Activated CD4-positive, alpha-beta T cell treated with anti-CD3 and anti-CD28 coated beads for 36 hours (primary cell): ENCODE measurements at regions of chr9 and their contacts with region 1.

Region 1: GRCh38 chr9:121074635-121075385 is at the start of gene CNTRL:
- DNase-seq: peak; percentile 98
- ATAC-seq: peak; percentile 89
- H3K4me3 Mint-ChIP-seq: peak within 1 kb of the TSS; percentile 96
- H3K27ac Mint-ChIP-seq: peak within 1 kb of the TSS; percentile 82
- H3K4me1 Mint-ChIP-seq: peaks cover 45% of the 10 kb centered on the region
- H3K27me3 Mint-ChIP-seq: no peaks in the 10 kb centered on the region
- total RNA-seq, gene CNTRL: 64.1 to 72.2 TPM

Region 2: GRCh38 chr9:120579750-120580590 is 494.8 kb before region 1 on chr9 and contains the start of gene CDK5RAP2:
- CTCF ChIA-PET with region 1: no interaction called
- POLR2A ChIA-PET with region 1: no interaction called
- intact Hi-C with region 1: loop called in 1 of 2 experiments (anchors 2 kb)
- DNase-seq: peak; percentile 96
- ATAC-seq: peak; percentile 99
- H3K4me3 Mint-ChIP-seq: peak within 1 kb of the TSS; percentile 99
- H3K27ac Mint-ChIP-seq: peak within 1 kb of the TSS; percentile 94
- H3K4me1 Mint-ChIP-seq: peaks cover 40% of the 10 kb centered on the region
- H3K27me3 Mint-ChIP-seq: no peaks in the 10 kb centered on the region
- total RNA-seq, gene CDK5RAP2: 68.8 to 85.8 TPM

Region 3: DNA sequence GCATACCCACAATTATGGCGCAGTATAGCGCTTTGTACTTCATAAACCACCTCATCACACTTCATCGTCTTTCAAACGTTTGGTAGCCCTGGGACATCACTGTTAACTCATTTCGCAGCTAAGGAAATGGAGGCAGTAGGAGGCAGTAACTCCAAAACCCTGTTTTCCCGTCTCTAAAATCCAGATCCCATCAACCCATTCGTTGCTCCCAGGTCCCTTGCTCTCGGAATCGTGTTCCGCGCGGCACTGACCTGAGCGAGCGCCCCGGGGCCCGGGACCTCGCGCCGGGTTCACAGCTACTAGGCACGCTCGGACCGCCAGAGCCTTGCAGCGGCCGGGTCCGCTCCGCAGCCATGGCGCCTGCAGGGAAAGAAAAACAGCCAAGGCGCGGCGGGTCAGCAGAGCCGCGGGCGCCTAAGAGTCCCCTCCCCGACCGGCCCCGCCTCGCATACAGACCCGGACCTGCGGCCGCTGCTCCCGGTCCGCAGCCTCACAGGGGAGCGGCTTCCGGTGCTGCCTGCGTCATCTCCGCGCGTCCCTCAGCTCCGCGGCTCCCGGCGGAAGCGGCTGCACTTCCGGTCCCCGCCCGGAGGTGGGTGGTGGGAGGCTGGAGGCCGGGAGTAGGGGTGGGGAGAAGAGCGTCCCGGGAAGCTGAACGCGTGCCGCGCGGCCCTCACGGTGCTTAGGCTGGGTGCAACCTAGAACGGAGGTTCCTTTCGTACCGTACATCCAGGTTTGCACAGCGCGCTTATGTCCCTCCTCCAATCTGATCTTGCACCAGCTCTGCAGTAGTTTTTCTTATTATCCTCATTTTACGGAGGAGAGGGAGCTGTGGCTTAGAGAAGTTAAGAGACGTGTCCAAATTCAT is 281.7 kb before region 1 on chr9 and contains the start of gene FBXW2:
- CTCF ChIA-PET with region 1: interaction called, 4 read pairs
- POLR2A ChIA-PET with region 1: interaction called, 3 read pairs
- intact Hi-C with region 1: loop called in 1 of 2 experiments (anchors 1 kb)
- DNase-seq: peak; percentile 95
- ATAC-seq: peak; percentile 92
- H3K4me3 Mint-ChIP-seq: peak within 1 kb of the TSS; percentile 93
- H3K27ac Mint-ChIP-seq: peak within 1 kb of the TSS; percentile 97
- H3K4me1 Mint-ChIP-seq: peaks cover 43% of the 10 kb centered on the region
- H3K27me3 Mint-ChIP-seq: no peaks in the 10 kb centered on the region
- total RNA-seq, gene FBXW2: 53.0 to 68.1 TPM

Region 4: DNA sequence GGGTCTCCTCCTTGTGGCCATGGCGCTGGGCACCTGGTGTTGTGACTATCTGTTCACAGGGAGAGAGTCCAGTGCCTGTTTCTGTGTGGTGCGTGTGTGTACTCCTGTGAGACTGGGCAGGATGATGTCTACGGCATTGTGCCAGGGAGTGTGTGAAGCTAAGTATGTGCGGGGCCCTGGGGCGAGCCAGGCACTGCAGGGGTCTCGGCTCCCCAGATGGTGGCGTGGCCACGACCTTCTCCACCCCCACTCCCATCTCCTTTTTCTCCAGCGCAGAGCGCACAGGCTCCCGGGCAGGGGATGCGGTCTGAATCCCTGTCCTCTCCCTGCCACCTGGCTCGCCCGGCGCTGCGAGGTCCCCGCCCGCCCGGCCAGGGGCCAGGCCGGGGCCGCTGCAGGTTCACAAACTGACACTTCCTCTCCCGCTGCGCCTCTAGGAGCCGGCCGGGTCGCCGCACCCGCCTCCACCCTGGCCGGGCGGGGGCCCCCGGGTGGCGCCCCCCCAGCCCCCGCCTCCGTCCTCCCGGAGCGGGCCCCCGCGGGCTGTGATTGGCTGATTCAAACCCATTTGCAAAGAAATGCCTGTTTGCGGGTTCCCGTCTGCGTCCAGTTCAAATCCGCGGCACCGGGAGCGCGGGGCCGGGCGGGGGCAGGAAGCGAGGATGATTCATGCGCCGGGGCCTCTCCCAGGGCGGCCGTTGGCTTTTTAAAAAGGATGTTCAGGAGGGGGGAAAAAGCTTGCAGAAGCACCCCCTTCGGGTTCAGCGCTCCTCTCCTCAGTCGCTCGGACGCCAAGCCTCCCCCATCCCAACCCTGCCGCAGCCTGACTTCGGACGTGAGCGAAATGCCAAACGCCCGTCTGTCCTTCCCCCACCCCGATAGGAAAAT is 198.6 kb before region 1 on chr9:
- CTCF ChIA-PET with region 1: interaction called, 3 read pairs
- POLR2A ChIA-PET with region 1: no interaction called
- intact Hi-C with region 1: loop called (anchors 2 to 10 kb)
- DNase-seq: peak; percentile 95
- ATAC-seq: peak; percentile 59
- H3K4me3 Mint-ChIP-seq: peak overlapping the region; percentile 85
- H3K27ac Mint-ChIP-seq: peak overlapping the region; percentile 94
- H3K4me1 Mint-ChIP-seq: peaks cover 73% of the 10 kb centered on the region
- H3K27me3 Mint-ChIP-seq: no peaks in the 10 kb centered on the region

Region 5: DNA sequence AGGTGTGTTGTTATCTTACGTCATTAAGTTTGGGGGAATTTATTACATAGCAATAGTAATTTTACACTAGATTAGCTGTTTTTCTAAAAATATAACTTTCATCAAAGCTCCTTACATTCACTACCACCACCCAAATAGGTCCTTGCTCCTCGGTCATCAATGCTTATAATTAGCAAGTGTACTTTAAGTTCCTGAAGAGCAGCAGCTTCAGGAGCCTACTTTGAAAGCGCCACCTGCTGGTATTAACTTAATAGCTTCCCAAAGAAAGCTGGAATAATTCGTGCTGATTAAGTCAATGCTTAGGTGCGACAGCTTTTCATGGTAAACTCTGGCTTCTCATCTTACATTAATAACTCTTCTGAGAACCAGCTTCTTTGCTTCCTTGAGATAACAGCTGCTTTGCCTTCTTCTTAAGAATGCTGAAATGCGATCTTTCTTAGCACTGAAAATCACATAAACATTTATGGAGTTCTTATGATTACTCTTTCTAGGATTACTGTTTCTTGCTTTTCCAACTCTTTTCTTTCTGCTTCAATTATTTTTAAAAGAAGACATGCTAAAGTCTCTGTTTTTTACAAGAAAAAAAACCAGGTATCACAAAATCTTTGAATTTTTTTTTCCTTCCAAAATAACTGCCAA is 14.7 kb before region 1 on chr9:
- CTCF ChIA-PET with region 1: interaction called, 20 read pairs
- POLR2A ChIA-PET with region 1: interaction called, 4 read pairs
- intact Hi-C with region 1: no loop called
- DNase-seq: peak; percentile 37
- ATAC-seq: no peak
- H3K4me3 Mint-ChIP-seq: no peak overlapping the region
- H3K27ac Mint-ChIP-seq: no peak overlapping the region
- H3K4me1 Mint-ChIP-seq: peaks cover 16% of the 10 kb centered on the region
- H3K27me3 Mint-ChIP-seq: no peaks in the 10 kb centered on the region

Region 6: GRCh38 chr9:121201738-121202533 is 127.1 kb after region 1 on chr9 and contains the start of gene RAB14:
- CTCF ChIA-PET with region 1: no interaction called
- POLR2A ChIA-PET with region 1: no interaction called
- intact Hi-C with region 1: loop called (anchors 1 kb)
- DNase-seq: peak; percentile 100
- ATAC-seq: peak; percentile 92
- H3K4me3 Mint-ChIP-seq: peak within 1 kb of the TSS; percentile 93
- H3K27ac Mint-ChIP-seq: peak within 1 kb of the TSS; percentile 93
- H3K4me1 Mint-ChIP-seq: peaks cover 38% of the 10 kb centered on the region
- H3K27me3 Mint-ChIP-seq: no peaks in the 10 kb centered on the region
- total RNA-seq, gene RAB14: 52.3 to 54.7 TPM